Activated T-helper 2 cell treated with anti-CD3 and anti-CD28 coated beads, Interferon-gamma antibody, Interleukin-2, Interleukin-4, amounts not matched to agents 10 μg/mL and 5 μg/mL and 100 μg/mL, durations not matched to agents 14 hours and 24 hours and 36 hours (primary cell): ENCODE measurements at regions of chr5 and their contacts with region 1.

Region 1: GRCh38 chr5:123423278-123424149 is at the start of gene CEP120:
- DNase-seq: peak; percentile 96
- H3K4me3 Mint-ChIP-seq: peak within 1 kb of the TSS; percentile 50
- H3K27ac Mint-ChIP-seq: no peak within 1 kb of the TSS
- H3K4me1 Mint-ChIP-seq: peaks cover 26% of the 10 kb centered on the region
- H3K27me3 Mint-ChIP-seq: no peaks in the 10 kb centered on the region
- total RNA-seq, gene CEP120: 25.3 and 26.7 TPM in 2 replicates

Region 2: DNA sequence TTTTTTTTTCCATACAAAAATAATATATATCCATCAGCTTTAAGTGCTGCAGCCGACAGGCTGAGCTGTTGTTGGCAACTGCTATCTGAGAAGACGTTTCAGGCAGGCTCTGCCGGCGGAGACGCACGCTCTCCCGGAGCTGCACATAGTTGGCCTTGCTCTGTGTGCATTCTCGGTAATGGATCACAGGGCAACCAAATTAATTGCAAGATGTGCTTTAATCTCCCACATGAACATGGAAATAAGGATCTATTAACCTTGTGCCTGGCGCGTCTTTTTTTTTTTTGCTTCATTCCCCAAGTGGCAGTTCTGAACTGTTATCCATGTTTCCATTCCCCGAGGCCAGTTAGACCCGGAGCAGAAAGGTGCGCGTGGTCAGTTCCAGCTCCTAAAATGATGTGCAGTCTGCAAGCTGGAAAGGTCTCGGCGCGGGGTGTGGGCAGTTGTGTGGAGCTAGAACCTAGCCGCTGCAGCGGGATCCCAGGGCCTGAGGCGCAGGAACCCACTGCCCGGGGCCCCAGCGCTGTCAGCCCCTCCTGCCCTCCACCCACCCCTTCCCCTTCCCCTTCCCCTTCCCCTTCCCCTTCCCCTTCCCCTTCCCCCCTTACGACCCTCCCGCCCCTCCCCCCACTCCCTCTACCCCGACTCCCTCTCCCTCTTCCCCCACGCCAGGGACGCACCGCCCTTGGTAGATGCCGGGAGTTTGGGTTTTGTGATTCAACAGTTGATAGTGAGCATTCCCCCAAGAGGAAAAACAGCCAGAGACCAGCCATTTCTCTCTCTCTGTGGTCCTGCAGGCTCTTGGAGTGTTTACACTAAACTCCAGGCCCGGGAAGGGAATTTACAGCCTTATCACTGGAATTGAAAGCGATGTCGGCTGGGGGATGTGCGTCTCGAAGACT is 138.1 kb before region 1 on chr5:
- intact Hi-C with region 1: no loop called
- DNase-seq: no peak
- H3K4me3 Mint-ChIP-seq: no peak overlapping the region
- H3K27ac Mint-ChIP-seq: no peak overlapping the region
- H3K4me1 Mint-ChIP-seq: no peaks in the 10 kb centered on the region
- H3K27me3 Mint-ChIP-seq: peaks cover 36% of the 10 kb centered on the region

Region 3: DNA sequence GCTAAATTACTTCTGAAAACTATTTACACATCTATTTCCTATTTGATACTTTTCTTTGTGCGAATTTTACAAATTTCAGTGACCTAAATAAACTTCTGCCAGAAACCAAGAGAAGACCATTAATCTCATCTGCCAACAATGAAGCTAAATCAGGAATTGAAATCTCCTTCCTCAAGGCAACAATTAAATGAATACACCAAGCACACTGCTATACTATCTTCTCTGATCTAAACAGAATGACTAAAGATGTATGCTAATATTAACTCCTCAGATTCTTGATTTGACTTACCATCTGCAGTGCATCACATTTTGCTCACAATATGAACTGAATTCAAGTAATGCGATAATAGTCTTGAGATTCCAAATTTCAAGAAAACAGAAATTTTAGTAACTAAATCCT is 82.6 kb before region 1 on chr5:
- intact Hi-C with region 1: no loop called
- DNase-seq: no peak
- H3K4me3 Mint-ChIP-seq: no peak overlapping the region
- H3K27ac Mint-ChIP-seq: no peak overlapping the region
- H3K4me1 Mint-ChIP-seq: no peaks in the 10 kb centered on the region
- H3K27me3 Mint-ChIP-seq: peaks cover 6% of the 10 kb centered on the region

Region 4: GRCh38 chr5:123438902-123439301 is 15.4 kb after region 1 on chr5:
- intact Hi-C with region 1: loop called (anchors 1 kb)
- DNase-seq: peak; percentile 29
- H3K4me3 Mint-ChIP-seq: no peak overlapping the region
- H3K27ac Mint-ChIP-seq: peak overlapping the region; percentile 81
- H3K4me1 Mint-ChIP-seq: peaks cover 33% of the 10 kb centered on the region
- H3K27me3 Mint-ChIP-seq: no peaks in the 10 kb centered on the region

Region 5: DNA sequence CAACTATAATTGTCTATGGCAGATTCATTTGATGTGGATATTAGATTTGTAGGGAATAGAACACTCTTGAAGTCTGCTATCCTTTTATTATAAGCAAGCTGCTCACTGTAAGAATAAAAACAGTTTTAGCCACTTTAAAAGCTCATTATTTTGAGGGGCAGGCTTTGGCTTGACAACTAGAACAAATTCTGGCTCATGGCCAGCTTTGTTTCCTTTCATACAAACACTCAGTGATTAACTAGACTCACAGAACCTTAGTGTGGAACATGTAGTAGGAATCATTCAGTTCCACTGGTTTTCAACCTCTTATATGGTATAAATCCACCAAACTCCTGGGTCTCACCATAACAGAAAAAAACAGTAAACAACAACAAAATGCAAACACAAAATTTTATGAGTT is 27.1 kb after region 1 on chr5:
- intact Hi-C with region 1: loop called (anchors 1 kb)
- DNase-seq: no peak
- H3K4me3 Mint-ChIP-seq: no peak overlapping the region
- H3K27ac Mint-ChIP-seq: no peak overlapping the region
- H3K4me1 Mint-ChIP-seq: peaks cover 51% of the 10 kb centered on the region
- H3K27me3 Mint-ChIP-seq: peaks cover 5% of the 10 kb centered on the region

Region 6: DNA sequence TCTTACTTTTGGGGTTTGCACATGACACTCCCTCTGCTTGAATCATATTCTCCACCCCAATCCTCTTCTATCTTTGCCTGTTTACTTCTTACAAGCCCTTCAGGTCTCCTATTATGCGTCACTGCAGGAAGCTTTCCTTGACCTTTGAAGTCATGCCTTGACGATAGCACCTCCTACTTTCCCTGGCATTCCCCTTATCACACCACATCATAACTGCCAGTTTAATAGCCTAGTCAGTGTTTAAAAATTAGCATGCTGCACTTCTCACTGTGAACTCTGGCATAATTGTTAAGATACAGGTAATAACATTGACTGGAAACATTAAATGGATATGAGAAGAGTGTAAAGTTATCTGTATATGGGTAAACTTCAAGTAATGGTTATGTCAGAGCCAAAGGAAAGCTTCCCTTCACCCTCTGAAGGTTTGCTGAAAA is 36.8 kb after region 1 on chr5:
- intact Hi-C with region 1: loop called (anchors 1 kb)
- DNase-seq: no peak
- H3K4me3 Mint-ChIP-seq: no peak overlapping the region
- H3K27ac Mint-ChIP-seq: peak overlapping the region; percentile 89
- H3K4me1 Mint-ChIP-seq: peaks cover 14% of the 10 kb centered on the region
- H3K27me3 Mint-ChIP-seq: peaks cover 2% of the 10 kb centered on the region

Region 7: GRCh38 chr5:123545506-123545905 is 122.0 kb after region 1 on chr5:
- intact Hi-C with region 1: loop called (anchors 1 kb)
- DNase-seq: no peak
- H3K4me3 Mint-ChIP-seq: no peak overlapping the region
- H3K27ac Mint-ChIP-seq: no peak overlapping the region
- H3K4me1 Mint-ChIP-seq: peaks cover 36% of the 10 kb centered on the region
- H3K27me3 Mint-ChIP-seq: no peaks in the 10 kb centered on the region

Region 8: GRCh38 chr5:123610665-123611405 is 187.3 kb after region 1 on chr5:
- intact Hi-C with region 1: loop called (anchors 1 kb)
- DNase-seq: no peak
- H3K4me3 Mint-ChIP-seq: no peak overlapping the region
- H3K27ac Mint-ChIP-seq: peak overlapping the region; percentile 49
- H3K4me1 Mint-ChIP-seq: peaks cover 15% of the 10 kb centered on the region
- H3K27me3 Mint-ChIP-seq: no peaks in the 10 kb centered on the region